IMR-90 (cell line): ENCODE measurements at regions of chr13 and their contacts with region 1.

Region 1: GRCh38 chr13:89352384-89352783 is 1681.2 kb downstream of the SLITRK5 start:
- DNase-seq: no peak
- ATAC-seq: no peak
- H3K4me3 ChIP-seq: no peak overlapping the region
- H3K27ac ChIP-seq: no peak overlapping the region
- H3K4me1 ChIP-seq: no peaks in the 10 kb centered on the region
- H3K27me3 ChIP-seq: no peaks in the 10 kb centered on the region
- CTCF ChIP-seq: no peak
- POLR2A ChIP-seq: no peak
- RAD21 ChIP-seq: no peak

Region 2: GRCh38 chr13:90872491-90873025 is 1520.2 kb after region 1 on chr13:
- CTCF ChIA-PET with region 1: no interaction called
- POLR2A ChIA-PET with region 1: no interaction called
- dilution Hi-C with region 1: no loop called
- in situ Hi-C with region 1: no loop called
- intact Hi-C with region 1: loop called (anchors 10 kb)
- DNase-seq: no peak
- ATAC-seq: no peak
- H3K4me3 ChIP-seq: no peak overlapping the region
- H3K27ac ChIP-seq: no peak overlapping the region
- H3K4me1 ChIP-seq: no peaks in the 10 kb centered on the region
- H3K27me3 ChIP-seq: no peaks in the 10 kb centered on the region
- CTCF ChIP-seq: no peak
- POLR2A ChIP-seq: no peak
- RAD21 ChIP-seq: no peak